Posterior vena cava (tissue), 2 donors: ENCODE measurements at regions of chr7 and their contacts with region 1.

Region 1: DNA sequence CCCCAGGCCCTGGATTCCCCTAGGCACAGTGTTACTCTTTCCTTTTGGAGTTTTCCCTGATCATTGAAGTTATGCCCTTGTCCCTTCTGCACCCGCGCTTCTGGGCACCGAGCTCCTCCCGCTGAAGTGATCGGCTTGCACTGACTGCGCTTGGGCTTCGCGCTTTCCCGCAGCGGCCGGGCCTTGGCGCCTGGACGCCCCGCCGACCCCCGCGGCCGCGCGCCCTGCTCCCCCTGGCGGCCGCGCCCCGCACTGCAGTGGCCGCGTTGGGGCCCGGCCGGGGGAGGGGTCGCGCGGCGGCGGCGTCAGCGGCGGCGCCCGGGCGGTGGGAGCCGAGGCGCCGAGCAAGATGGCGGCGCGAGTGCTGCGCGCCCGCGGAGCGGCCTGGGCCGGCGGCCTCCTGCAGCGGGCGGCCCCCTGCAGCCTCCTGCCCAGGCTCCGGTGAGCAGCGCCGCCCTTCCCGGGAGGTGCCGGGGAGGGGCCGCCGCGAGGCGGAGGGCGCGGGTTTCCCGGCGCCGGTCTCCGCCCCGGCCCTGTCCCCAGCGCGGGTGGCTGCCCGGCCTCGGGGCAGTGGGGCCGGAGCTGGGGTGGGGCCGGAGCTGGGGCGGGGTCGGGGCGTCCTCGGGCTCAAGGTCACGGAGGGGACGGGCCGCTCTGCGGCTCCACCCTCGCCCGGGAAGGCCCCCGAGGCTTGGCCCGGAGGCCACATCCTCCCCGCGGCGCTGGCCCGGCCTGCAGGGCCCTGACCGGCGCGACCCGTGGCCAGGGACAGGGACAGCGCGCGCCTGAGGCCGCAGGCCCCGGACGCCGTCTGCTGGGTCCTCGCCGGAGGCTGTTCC is at the start of gene NIPSNAP2:
- DNase-seq: peak; percentile 93
- total RNA-seq, gene NIPSNAP2: 59.1 to 62.2 TPM

Region 2: GRCh38 chr7:56074371-56074791 is 109.9 kb after region 1 on chr7:
- intact Hi-C with region 1: loop called in 1 of 2 experiments (anchors 10 kb)
- DNase-seq: peak; percentile 92